Aorta (tissue), 5 donors: ENCODE measurements at regions of chr2 and their contacts with region 1.

Region 1: GRCh38 chr2:238370823-238371372 is 50.6 kb downstream of the TRAF3IP1 start:
- DNase-seq: peak; percentile 73 to 85
- ATAC-seq: peak; percentile 86
- H3K4me3 ChIP-seq: no peak overlapping the region
- H3K27ac ChIP-seq: no peak overlapping the region
- H3K4me1 ChIP-seq: no peaks in the 10 kb centered on the region
- H3K27me3 ChIP-seq: no peaks in the 10 kb centered on the region

Region 2: DNA sequence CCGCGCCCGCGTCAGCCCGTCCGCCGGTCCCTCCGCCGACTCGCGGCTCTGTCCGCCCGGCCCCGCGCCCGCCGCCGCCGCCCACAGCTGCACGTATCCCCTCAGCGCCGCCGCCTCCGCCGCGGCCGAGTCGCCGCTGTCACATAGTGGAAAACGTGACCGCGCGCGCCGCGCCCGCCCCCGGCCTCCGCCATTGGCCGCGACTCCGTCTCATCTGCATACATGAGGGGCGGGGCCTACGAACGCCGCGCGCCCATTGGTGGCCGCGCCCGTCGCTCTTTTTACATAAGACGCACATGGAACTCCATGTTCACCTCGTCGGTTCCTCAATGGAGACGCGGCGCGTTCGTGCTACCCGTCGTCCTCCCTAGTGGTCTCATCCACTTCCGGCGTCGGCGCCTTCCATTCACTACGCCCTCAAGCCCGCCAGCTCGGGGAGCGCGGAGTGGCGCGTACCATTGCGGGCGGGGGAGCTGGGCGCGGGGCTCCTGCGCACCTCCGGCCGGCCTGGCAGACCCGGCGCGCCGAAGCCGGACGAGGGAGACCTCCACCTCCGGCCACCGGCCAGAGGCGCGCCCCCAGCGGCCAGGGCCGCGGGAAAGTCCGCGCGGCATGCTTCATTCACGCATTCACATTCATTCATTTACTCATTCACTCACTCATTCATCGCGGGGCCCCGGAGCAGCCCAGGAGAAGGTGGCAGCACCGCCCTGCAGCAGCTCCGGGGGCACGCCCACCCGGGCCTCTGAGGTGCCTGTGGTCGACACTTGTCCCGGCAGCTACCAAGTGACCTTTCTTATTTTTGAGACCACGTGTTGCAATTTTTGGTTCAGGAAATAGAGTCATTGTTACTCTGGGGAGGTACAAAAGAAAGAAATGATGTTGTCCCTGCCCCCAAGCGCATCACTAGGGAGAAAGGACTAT is 82.0 kb before region 1 on chr2:
- intact Hi-C with region 1: no loop called
- DNase-seq: peak; percentile 98 to 99
- ATAC-seq: peak; percentile 91
- H3K4me3 ChIP-seq: peak overlapping the region; percentile 58 to 69
- H3K27ac ChIP-seq: peak overlapping the region; percentile 81 to 88
- H3K4me1 ChIP-seq: no peaks in the 10 kb centered on the region
- H3K27me3 ChIP-seq: no peaks in the 10 kb centered on the region

Region 3: DNA sequence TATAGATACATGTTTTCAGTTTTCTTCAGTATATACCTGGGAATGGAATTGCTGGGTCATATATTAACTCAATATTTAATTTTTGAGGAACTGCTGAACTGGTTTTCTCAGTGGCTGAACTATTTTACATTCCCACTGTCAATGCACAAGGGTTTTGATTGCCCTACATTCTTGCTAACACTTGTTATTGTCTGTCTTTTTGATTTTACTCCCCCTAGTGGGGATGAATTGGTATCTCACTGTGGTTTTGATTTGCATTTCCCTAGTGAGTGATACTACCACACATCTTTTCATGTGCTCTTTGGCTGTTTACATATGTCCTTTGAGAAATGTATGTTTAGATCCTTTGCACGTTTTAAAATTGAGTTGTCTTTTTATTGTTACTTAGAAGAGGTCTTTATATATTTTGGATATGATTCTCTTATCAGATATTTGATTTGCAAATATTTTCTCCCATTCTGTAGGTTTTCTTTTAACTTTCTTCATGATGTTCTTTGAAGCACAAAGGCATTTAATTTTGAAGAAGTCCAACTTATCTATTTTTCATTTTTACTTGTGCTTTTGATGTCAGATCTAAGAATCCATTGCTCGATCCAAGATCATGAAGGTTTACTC is 92.0 kb after region 1 on chr2:
- intact Hi-C with region 1: loop called (anchors 2 kb)
- DNase-seq: no peak
- ATAC-seq: no peak
- H3K4me3 ChIP-seq: no peak overlapping the region
- H3K27ac ChIP-seq: no peak overlapping the region
- H3K4me1 ChIP-seq: no peaks in the 10 kb centered on the region
- H3K27me3 ChIP-seq: no peaks in the 10 kb centered on the region

Region 4: DNA sequence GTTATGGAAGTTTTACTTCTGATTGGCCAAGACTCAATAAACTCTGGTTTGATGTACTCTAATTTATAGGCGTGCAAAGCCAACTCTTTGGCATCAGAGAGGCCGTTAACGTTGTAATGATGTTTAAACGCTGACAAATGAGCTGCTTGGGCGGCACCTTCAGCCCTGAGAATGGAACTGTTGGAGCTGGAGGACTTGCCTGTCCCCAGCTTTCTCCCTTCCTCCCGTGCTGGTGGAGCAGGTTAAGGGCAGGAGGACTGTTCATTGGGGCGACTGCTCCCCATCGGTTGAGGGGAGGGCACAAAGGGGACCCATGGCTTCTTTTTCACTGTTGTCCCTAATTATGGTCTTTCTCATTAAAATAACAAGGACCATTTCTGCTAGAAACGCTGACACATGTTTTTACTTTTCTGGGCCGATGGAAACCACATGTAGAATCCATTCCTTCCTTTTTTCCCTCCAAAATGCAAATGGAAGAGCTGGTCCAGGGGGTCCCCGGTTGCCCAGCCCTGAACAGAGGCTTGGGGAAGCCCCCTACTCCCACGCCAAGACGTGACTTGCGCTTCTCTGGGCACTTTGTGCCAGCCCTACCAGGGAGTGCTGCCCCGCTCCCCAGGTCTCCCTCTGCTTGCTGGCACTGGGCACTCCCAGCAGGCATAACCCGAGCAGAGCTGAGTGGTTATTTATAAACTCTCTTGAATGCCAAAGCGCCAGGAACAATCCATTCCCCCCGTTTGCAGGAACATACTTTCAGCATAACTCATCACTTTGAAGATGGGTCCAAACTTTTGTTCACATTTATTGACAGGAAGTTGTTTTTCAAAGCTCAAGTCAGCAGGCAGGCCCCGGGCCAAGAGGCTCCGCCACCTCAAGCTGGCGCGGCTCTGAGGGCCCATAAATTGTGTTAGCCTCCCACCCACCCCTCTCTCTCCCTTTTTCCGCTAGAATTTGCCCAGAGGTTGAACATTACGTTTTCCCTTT is 226.0 kb after region 1 on chr2:
- intact Hi-C with region 1: loop called in 1 of 2 experiments (anchors 5 kb)
- DNase-seq: peak; percentile 73 to 89
- ATAC-seq: peak; percentile 77
- H3K4me3 ChIP-seq: no peak overlapping the region
- H3K27ac ChIP-seq: peak overlapping the region in 1 of 2 donors; percentile 55
- H3K4me1 ChIP-seq: peaks cover 3 to 8% of the 10 kb centered on the region in 2 donors
- H3K27me3 ChIP-seq: no peaks in the 10 kb centered on the region

Region 5: GRCh38 chr2:238615187-238615586 is 244.3 kb after region 1 on chr2:
- intact Hi-C with region 1: loop called in 1 of 2 experiments (anchors 5 kb)
- DNase-seq: no peak
- ATAC-seq: no peak
- H3K4me3 ChIP-seq: no peak overlapping the region
- H3K27ac ChIP-seq: no peak overlapping the region
- H3K4me1 ChIP-seq: no peaks in the 10 kb centered on the region
- H3K27me3 ChIP-seq: no peaks in the 10 kb centered on the region

Region 6: DNA sequence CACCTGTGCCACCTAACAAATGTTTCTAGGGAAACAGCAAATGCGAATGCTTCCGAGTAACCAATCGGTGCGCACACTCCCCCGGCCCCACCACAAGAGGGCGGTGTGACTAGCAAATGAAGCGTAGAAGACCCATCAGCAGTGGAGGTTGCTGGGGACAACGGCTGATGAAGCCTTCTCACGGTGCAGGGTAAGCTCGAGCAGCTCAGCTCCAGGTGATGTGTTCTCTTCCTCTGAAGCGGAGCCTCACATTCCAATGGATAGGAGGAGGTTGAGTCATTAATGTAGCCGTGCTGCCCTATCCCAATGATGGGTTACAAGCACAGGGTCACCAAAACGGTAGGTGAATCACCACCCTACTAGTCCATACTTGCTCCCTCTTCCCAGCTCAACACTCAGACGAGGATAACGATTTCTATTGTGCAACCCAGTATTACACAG is 349.4 kb after region 1 on chr2:
- intact Hi-C with region 1: loop called in 1 of 2 experiments (anchors 10 kb)
- DNase-seq: peak; percentile 66 to 87
- ATAC-seq: no peak
- H3K4me3 ChIP-seq: no peak overlapping the region
- H3K27ac ChIP-seq: no peak overlapping the region
- H3K4me1 ChIP-seq: no peaks in the 10 kb centered on the region
- H3K27me3 ChIP-seq: no peaks in the 10 kb centered on the region

Region 7: DNA sequence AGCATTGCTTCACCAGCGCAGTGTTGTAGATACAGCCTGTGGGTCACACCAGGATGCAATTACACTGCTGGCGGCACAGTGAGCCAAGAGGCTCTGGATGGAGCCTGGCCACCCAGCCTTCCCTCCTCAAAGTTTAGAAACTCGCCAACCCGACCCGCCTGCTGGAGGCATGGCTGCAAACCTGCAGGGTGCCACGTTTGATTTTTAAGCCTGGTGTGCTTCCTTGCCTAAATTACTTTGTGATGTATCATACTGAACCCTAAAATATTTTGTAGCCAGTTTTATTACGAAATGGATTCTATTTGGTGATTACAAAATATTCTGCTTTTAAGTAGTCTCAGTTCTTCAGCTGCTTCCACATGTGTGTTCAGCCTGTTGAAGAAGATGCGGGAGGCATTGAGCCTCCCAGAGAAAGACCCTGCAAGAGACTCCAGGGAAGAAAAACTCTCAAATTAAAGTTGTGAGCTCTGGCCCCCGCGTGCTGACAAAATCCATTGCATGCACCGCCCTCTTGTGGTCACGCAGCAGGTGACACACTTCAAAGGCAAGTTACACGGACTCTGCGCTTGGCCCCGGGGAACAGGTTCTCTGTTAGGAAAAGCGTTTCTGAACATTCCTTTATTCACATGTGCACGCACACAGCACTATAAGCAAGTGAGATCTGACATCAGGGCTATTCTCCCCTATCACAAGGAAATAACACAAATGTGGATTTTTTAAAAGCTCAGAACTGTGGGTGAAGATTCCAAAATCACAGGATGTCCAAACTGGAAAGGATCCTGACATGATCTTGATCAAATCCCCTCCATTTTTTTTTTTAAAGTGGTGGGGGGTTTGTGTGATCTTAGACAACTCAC is 414.0 kb after region 1 on chr2:
- intact Hi-C with region 1: loop called (anchors 5 kb)
- DNase-seq: peak; percentile 75 to 91
- ATAC-seq: peak; percentile 86
- H3K4me3 ChIP-seq: no peak overlapping the region
- H3K27ac ChIP-seq: no peak overlapping the region
- H3K4me1 ChIP-seq: no peaks in the 10 kb centered on the region
- H3K27me3 ChIP-seq: no peaks in the 10 kb centered on the region

Region 8: DNA sequence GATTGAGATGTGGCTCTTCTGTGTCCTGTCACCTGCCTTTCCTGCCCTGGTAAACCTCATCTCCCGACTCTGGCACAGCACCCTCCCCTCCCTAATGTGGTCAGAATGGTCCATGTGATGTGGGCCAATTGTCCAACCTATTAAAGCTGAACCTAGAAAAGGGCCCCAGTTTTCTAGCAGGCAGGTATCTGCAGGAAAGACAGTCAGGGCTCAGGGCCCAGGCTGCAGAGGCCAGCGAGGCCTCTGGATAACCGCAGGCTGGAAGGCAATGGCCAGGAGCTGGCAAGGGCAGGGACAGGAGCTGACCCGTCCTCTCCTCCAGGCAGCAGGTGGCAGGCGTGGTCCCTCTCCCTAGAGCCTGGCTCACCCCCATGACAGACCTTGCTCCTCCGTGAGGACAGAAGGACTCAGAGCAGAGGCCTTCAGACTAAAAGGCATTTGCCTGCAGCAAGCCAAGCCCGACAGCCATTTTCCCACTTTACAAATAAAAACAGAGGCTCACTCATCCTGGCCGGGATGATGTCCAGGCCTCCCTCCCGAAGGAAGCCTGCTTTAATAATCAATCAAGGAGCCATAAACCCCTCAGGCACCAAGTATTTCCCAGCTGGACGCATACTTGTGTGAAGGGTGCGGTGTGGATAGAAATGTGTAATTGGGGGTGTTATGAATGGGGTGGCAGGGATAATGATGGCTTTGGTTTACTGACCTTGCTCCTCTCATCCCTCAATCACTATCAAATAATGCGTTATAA is 584.1 kb after region 1 on chr2:
- intact Hi-C with region 1: loop called in 1 of 2 experiments (anchors 10 kb)
- DNase-seq: peak in 1 of 2 donors; percentile 38
- ATAC-seq: no peak
- H3K4me3 ChIP-seq: no peak overlapping the region
- H3K27ac ChIP-seq: no peak overlapping the region
- H3K4me1 ChIP-seq: no peaks in the 10 kb centered on the region
- H3K27me3 ChIP-seq: no peaks in the 10 kb centered on the region

Region 9: GRCh38 chr2:239015218-239015900 is 644.5 kb after region 1 on chr2:
- intact Hi-C with region 1: no loop called
- DNase-seq: peak in 1 of 2 donors; percentile 58
- ATAC-seq: no peak
- H3K4me3 ChIP-seq: no peak overlapping the region
- H3K27ac ChIP-seq: no peak overlapping the region
- H3K4me1 ChIP-seq: no peaks in the 10 kb centered on the region
- H3K27me3 ChIP-seq: no peaks in the 10 kb centered on the region